ENCODE measurements at regions of chr14 and their contacts with region 1.

Region 1: GRCh38 chr14:22829661-22830442 is at the start of gene MRPL52:
- DNase-seq: peak; percentile 60 to 68
- H3K4me3 ChIP-seq: peak within 1 kb of the TSS; percentile 75
- H3K27ac ChIP-seq: peak within 1 kb of the TSS; percentile 65
- H3K4me1 ChIP-seq: peaks cover 7% of the 10 kb centered on the region
- H3K27me3 ChIP-seq: no peaks in the 10 kb centered on the region
- CTCF ChIP-seq: no peak
- total RNA-seq, gene MRPL52: 76.7 and 84.8 TPM in 2 replicates

Region 2: GRCh38 chr14:22536853-22537338 is 293.0 kb before region 1 on chr14:
- CTCF ChIA-PET with region 1: no interaction called
- POLR2A ChIA-PET with region 1: no interaction called
- intact Hi-C with region 1: no loop called
- DNase-seq: peak; percentile 49 to 76
- H3K4me3 ChIP-seq: no peak overlapping the region
- H3K27ac ChIP-seq: 0 out of 2 replicates have a peak overlapping the region, but pooled peaks have one; percentile 13
- H3K4me1 ChIP-seq: peaks cover 12% of the 10 kb centered on the region
- H3K27me3 ChIP-seq: no peaks in the 10 kb centered on the region
- CTCF ChIP-seq: no peak

Region 3: GRCh38 chr14:22852940-22853767 is 23.3 kb after region 1 on chr14:
- CTCF ChIA-PET with region 1: interaction called, 22 read pairs
- POLR2A ChIA-PET with region 1: no interaction called
- intact Hi-C with region 1: no loop called
- DNase-seq: peak in 1 of 2 experiments; percentile 80
- H3K4me3 ChIP-seq: peak overlapping the region; percentile 48; the same call in 1 of the 2 replicates
- H3K27ac ChIP-seq: no peak overlapping the region
- H3K4me1 ChIP-seq: peaks cover 4% of the 10 kb centered on the region; the same call in 1 of the 2 replicates
- H3K27me3 ChIP-seq: no peaks in the 10 kb centered on the region
- CTCF ChIP-seq: peak; percentile 91

Region 4: DNA sequence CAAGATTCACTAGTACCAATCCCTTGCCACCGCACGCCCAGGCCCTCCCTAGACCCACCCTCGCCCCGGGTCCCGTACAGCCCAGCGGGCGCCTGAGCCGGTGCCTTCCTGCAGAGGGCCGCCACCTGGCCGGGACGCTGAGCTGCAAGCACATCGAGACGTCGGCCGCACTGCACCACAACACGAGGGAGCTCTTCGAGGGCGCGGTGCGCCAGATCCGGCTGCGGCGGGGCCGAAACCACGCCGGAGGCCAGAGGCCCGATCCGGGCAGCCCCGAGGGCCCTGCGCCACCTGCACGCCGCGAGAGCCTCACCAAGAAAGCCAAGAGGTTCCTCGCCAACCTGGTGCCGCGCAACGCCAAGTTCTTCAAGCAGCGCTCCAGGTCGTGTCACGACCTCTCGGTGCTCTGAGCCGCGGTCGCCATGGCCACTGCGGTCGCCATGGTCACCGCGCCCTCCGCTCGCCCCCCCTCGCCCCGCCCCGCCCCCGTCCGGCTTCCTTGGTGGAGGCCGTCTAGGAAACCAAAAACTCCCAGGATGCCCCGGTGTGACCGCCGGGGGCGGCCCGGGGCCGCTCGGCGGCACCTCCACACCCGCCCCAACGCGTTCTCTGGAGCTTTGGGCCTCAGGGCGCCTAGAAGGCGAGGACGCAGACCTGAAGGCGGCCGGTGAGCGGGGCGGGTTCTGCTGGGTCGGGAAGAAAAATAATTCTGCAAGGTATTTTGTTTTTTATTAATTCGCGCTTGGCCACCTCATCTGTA is 56.8 kb after region 1 on chr14:
- CTCF ChIA-PET with region 1: interaction called, 4 read pairs
- POLR2A ChIA-PET with region 1: interaction called, 13 read pairs
- intact Hi-C with region 1: no loop called
- DNase-seq: peak; percentile 63 to 66
- H3K4me3 ChIP-seq: peak overlapping the region; percentile 68
- H3K27ac ChIP-seq: peak overlapping the region; percentile 61
- H3K4me1 ChIP-seq: peaks cover 7% of the 10 kb centered on the region; the same call in 1 of the 2 replicates
- H3K27me3 ChIP-seq: no peaks in the 10 kb centered on the region
- CTCF ChIP-seq: no peak; the same call in 1 of the 2 replicates

Region 5: GRCh38 chr14:22922294-22922983 is 92.6 kb after region 1 on chr14:
- CTCF ChIA-PET with region 1: no interaction called
- POLR2A ChIA-PET with region 1: no interaction called
- intact Hi-C with region 1: no loop called
- DNase-seq: no peak
- H3K4me3 ChIP-seq: no peak overlapping the region
- H3K27ac ChIP-seq: 0 out of 2 replicates have a peak overlapping the region, but pooled peaks have one; percentile 12
- H3K4me1 ChIP-seq: peaks cover 15% of the 10 kb centered on the region
- H3K27me3 ChIP-seq: no peaks in the 10 kb centered on the region
- CTCF ChIP-seq: no peak

Measured in PC-9 (cell line).